Thyroid gland (tissue), 4 donors: ENCODE measurements at regions of chr10 and their contacts with region 1.

Region 1: GRCh38 chr10:132223156-132223590 is 36.4 kb downstream of the DPYSL4 start:
- DNase-seq: peak; percentile 75 to 79
- H3K4me3 ChIP-seq: no peak overlapping the region
- H3K27ac ChIP-seq: no peak overlapping the region
- H3K4me1 ChIP-seq: no peaks in the 10 kb centered on the region
- H3K27me3 ChIP-seq: no peaks in the 10 kb centered on the region
- CTCF ChIP-seq: peak; percentile 50 to 97 (median 88)
- POLR2A ChIP-seq: no peak

Region 2: GRCh38 chr10:132353456-132354355 is 130.5 kb after region 1 on chr10:
- intact Hi-C with region 1: loop called (anchors 2 kb)
- DNase-seq: no peak
- H3K4me3 ChIP-seq: no peak overlapping the region
- H3K27ac ChIP-seq: no peak overlapping the region
- H3K4me1 ChIP-seq: no peaks in the 10 kb centered on the region
- H3K27me3 ChIP-seq: no peaks in the 10 kb centered on the region
- CTCF ChIP-seq: no peak
- POLR2A ChIP-seq: no peak

Region 3: GRCh38 chr10:132452631-132453469 is 229.7 kb after region 1 on chr10:
- intact Hi-C with region 1: loop called (anchors 2 kb)
- DNase-seq: peak; percentile 93 to 94
- H3K4me3 ChIP-seq: no peak overlapping the region
- H3K27ac ChIP-seq: peak overlapping the region in 1 of 3 donors; percentile 30
- H3K4me1 ChIP-seq: peaks cover 11 to 23% of the 10 kb centered on the region in 2 donors
- H3K27me3 ChIP-seq: no peaks in the 10 kb centered on the region
- CTCF ChIP-seq: peak; percentile 81 to 99 (median 97)
- POLR2A ChIP-seq: no peak

Region 4: DNA sequence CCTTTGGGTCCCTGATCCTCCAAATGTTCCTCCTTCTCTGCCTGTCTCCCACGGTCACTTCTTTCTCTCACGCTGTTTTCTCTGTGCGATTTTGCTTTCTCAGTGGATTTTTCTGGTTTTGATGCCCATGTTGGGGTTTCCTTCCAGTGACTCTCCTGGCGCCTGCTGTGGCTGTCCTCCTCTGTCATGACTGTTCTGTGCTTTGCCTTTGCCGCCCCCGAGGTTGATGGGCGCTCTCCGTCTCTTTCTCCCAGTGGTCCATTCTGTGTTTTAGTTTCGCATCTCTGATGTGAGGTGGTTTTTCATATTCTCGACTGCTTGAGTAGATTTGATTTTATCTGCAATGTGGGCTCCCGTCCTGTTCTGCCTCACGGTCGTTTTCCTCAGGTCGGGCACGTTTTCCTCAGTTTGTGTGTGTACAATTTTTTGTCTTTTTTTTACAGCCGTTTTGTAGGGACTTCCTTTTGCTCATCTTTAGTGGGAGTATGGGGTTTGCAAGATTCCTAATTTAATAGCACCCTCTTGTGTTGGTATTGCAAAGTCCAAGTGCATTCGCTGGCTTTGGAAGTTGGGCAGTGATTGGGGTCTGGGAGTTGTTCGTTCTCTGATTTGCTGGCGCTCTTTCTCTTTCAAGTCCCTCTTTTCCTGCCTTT is 414.4 kb after region 1 on chr10:
- intact Hi-C with region 1: loop called (anchors 10 kb)
- DNase-seq: no peak
- H3K4me3 ChIP-seq: no peak overlapping the region
- H3K27ac ChIP-seq: no peak overlapping the region
- H3K4me1 ChIP-seq: peaks cover 2 to 16% of the 10 kb centered on the region in 2 donors
- H3K27me3 ChIP-seq: no peaks in the 10 kb centered on the region
- CTCF ChIP-seq: peak in 5 of 6 experiments; percentile 37 to 93 (median 65)
- POLR2A ChIP-seq: no peak